AG04450 (cell line): ENCODE measurements at regions of chr1 and their contacts with region 1.

Region 1: DNA sequence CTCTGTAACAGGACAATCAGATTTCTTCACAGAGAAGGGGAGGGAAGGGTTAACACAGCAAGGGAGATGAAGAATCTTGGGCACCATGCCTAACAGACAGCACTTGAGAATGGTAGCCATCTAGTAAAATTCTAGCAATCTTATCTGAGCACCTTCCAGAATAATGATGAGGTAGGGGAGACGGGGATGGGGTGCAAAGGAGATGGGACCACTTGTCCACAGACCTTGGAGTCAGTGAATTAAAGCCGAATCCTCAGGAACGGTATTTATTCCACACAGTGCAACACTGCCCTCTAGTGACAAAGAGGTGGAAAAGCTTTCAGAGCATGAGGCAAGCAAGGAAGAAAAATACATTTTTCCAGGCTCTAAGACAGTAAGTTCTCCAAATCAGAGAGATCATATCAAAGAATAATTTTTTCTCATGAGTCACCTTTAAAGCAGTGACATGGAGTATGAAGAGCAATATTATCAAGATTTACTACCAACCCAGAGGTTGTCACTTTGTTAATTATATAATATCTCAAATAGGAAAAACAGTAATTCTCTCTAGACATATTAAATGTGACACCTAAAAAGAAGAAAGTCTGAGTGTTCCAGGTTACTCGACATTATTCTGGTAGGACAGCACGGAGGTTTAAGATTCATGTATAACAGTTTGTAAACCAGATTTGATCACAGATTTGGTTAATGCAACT is 43.3 kb upstream of the LPAR3 start:
- DNase-seq: peak; percentile 38
- H3K4me3 ChIP-seq: no peak overlapping the region
- H3K27ac ChIP-seq: no peak overlapping the region
- H3K27me3 ChIP-seq: no peaks in the 10 kb centered on the region
- CTCF ChIP-seq: peak; percentile 95

Region 2: DNA sequence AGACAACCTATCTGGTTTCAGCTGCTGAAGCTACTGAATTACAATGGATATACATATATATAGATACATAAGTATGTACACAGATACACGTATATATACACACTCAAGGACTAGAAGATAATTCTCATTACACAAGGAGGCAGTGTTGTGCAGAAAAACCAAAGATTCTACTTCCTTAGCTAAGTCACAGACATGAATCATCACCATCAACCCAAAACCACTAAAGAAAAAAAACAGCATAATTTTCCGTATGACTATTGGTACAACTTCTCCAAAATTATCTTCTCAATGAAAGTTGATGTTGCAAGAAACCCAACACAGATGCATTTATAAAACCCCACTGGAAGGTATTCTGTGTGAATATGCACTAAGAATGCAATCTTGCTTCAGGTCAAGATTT is 494.0 kb before region 1 on chr1:
- CTCF ChIA-PET with region 1: interaction called, 16 read pairs
- POLR2A ChIA-PET with region 1: no interaction called
- DNase-seq: peak; percentile 78
- H3K4me3 ChIP-seq: no peak overlapping the region
- H3K27ac ChIP-seq: no peak overlapping the region
- H3K27me3 ChIP-seq: no peaks in the 10 kb centered on the region
- CTCF ChIP-seq: peak; percentile 57

Region 3: DNA sequence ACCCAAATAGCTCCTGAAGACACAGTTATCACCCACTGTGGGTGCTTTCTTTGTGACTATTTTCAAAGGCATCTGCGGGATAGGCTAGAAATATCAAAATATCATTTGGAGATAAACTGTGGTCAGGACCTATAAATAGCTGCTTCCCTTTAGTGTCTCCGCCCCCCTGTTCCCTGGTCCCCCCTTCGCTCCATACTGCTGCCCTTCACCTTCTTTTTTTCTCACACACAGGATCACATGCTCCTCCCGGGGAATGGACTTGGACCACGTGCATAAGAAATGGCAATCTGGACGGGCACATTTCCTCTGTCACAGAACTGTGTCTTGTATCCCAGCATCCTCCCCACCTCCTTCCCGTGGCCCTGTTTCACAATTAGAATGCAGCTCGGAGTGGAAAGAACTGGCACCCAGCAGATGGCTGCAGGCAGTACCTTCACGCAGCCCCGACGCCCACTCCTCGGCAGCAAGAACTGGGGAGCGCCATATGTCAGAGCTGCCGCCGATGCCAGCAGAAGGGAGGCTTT is 177.2 kb before region 1 on chr1:
- CTCF ChIA-PET with region 1: interaction called, 34 read pairs
- POLR2A ChIA-PET with region 1: no interaction called
- DNase-seq: no peak
- H3K4me3 ChIP-seq: no peak overlapping the region
- H3K27ac ChIP-seq: no peak overlapping the region
- H3K27me3 ChIP-seq: peaks cover 4% of the 10 kb centered on the region
- CTCF ChIP-seq: no peak

Region 4: GRCh38 chr1:84781946-84782771 is 154.1 kb before region 1 on chr1:
- CTCF ChIA-PET with region 1: interaction called, 23 read pairs
- POLR2A ChIA-PET with region 1: no interaction called
- DNase-seq: no peak
- H3K4me3 ChIP-seq: no peak overlapping the region
- H3K27ac ChIP-seq: no peak overlapping the region
- H3K27me3 ChIP-seq: peaks cover 2% of the 10 kb centered on the region
- CTCF ChIP-seq: peak; percentile 56

Region 5: GRCh38 chr1:84862810-84863251 is 73.4 kb before region 1 on chr1:
- CTCF ChIA-PET with region 1: no interaction called
- POLR2A ChIA-PET with region 1: no interaction called
- DNase-seq: no peak
- H3K4me3 ChIP-seq: no peak overlapping the region
- H3K27ac ChIP-seq: no peak overlapping the region
- H3K27me3 ChIP-seq: no peaks in the 10 kb centered on the region
- CTCF ChIP-seq: no peak

Region 6: GRCh38 chr1:84973498-84974334 is 37.5 kb after region 1 on chr1:
- CTCF ChIA-PET with region 1: no interaction called
- POLR2A ChIA-PET with region 1: no interaction called
- DNase-seq: no peak
- H3K4me3 ChIP-seq: no peak overlapping the region
- H3K27ac ChIP-seq: no peak overlapping the region
- H3K27me3 ChIP-seq: no peaks in the 10 kb centered on the region
- CTCF ChIP-seq: no peak